ENCODE measurements at regions of chr7 and their contacts with region 1.

Region 1: DNA sequence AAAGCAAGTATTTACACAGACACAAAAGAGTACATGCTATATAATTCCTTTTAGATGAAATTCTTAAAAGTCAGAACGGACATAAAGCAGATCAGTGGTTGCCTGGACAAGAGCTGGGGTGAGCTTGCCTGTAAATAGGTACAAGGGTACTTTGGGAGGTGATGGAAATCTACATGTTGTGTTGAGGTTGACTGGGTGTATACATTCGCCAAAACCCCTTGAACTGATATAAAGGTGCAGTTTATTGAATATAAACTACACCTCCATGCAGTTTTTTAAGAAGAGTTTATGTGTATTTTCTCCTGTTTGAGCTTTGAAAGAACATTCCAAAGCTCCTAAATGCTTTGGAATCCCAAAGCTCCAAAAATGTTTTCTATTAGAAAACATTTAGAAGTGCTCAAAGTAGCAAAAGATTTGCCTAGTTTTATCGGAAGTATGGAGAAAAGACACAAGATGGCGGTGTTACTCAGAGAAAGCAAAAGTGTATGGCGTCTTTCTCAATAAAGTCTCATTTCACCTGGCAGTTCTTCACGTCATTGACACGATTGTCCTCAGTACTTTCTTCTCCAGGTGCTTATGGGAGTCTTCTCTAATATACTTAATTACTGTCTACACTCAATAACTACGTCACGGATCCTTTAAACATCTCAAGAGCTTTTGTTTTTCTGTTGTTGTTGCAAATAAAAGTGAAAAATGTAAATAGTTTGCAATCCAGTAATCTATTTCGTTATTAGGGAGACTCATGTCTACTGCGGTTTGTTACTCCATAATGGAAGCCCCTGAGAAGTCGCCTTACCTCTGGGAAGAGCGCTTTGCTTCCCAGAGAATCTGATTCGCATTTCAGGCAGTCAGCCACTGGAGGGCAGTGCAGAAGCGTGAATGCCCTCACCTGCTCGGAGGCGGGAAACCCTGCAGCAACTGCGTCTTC is 14.7 kb upstream of the SEC61G start:
- DNase-seq: peak; percentile 64
- CTCF ChIP-seq: peak; percentile 91

Region 2: DNA sequence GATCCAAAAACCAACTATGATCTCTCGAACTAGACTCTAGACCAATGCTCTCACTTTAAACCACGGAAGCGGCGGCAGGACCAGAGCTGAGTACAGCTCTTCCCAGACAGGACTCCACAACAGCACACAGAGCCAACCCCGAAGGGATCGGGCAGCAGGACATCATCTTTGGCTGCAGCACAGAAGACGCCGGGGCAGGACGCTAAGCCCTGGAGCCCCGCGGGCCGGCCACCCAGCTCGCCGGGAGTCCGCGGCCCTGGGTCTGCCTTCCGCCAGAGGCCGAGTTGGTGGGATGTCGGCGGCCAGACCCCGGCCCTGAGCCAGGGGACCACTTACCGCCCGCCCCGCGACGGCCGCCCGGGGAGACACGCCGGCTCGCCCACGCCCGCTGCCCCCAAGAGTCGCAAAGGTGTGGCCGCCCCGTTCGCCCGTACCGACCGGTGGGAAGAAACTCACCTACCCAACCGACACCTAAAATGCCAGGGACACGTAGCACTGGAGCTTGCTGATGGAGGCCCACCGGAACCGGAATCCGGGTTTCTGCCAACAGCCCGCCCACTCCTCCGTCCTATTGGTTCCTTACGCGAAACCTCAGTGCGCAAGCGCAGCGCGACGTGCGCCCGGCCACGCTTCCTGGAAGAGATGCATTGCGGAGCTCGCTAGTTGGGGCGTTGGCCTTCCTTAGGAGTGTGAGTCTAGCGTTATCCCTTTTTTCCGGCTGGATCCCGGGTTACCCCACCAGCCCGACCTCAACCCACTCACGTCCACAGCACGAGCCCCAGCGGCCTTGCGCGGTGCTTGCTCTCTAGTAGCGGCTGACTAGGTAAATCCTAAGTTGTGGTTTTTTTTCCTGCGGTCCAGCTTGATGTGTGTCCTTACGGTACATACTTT is 14.8 kb before region 1 on chr7 and contains the start of gene SEC61G:
- CTCF ChIA-PET with region 1: interaction called, 18 read pairs
- POLR2A ChIA-PET with region 1: interaction called, 3 read pairs
- DNase-seq: peak; percentile 95
- CTCF ChIP-seq: no peak

Region 3: GRCh38 chr7:54788664-54789063 is 14.9 kb after region 1 on chr7:
- CTCF ChIA-PET with region 1: interaction called, 16 read pairs
- POLR2A ChIA-PET with region 1: no interaction called
- DNase-seq: peak; percentile 54
- CTCF ChIP-seq: peak; percentile 38

Region 4: DNA sequence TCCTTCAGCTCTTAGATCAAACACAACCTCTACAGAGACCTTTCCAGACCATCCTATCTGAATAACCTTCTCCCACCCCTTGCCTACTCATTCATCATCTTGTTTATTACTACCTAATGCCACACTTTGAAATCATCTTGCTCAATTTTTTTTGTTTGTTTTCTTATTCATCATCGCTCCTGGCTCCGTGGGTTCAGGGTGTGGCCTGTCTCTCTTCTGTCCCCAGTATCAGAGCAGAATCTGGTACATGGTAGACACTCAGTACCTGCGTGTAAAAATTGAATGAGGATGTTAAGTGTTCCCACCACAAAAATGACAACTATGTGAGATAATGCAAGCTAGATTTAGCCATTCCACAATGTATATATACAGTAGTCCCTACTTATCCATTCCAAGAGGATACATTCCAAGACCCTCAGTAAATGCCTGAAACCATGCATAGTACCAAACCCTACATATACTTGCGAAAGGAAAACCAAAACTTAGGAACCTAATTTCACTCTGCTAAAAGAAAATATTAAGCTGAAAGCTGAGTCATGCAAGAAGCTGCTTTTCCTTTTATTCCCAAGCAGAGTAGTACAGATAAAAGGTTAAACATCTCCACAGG is 57.4 kb after region 1 on chr7:
- CTCF ChIA-PET with region 1: no interaction called
- POLR2A ChIA-PET with region 1: no interaction called
- DNase-seq: no peak
- CTCF ChIP-seq: no peak

Region 5: GRCh38 chr7:55250313-55250712 is 476.6 kb after region 1 on chr7:
- CTCF ChIA-PET with region 1: interaction called, 224 read pairs
- POLR2A ChIA-PET with region 1: interaction called, 3 read pairs
- DNase-seq: no peak
- CTCF ChIP-seq: peak; percentile 20

Measured in GM10248 (cell line).